Endothelial cell of umbilical vein (primary cell): ENCODE measurements at regions of chr10 and their contacts with region 1.

Region 1: DNA sequence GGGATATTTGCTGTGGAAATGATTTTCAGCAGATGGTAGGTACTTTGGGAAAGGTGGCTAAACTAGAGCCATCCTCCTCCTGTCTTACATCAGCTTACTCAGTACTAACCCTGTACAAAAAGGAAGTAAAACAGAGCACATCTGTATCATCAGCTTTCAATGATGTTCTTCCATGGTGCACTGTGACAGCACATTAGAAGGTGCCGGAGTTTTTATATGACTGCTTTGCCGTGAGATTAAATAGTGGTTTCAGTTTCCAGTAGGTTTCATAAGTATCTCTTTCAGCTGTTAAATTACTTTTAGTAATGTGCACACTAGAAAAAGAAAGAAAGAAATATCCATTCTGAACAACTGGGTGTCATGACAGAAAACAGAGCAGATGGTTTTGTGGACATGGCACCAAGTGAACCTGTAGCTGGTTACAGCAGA is 86.5 kb downstream of the ARID5B start:
- DNase-seq: no peak
- H3K4me3 ChIP-seq: no peak overlapping the region
- H3K27ac ChIP-seq: no peak overlapping the region
- H3K4me1 ChIP-seq: peaks cover 9% of the 10 kb centered on the region
- H3K27me3 ChIP-seq: no peaks in the 10 kb centered on the region
- CTCF ChIP-seq: no peak
- POLR2A ChIP-seq: no peak

Region 2: DNA sequence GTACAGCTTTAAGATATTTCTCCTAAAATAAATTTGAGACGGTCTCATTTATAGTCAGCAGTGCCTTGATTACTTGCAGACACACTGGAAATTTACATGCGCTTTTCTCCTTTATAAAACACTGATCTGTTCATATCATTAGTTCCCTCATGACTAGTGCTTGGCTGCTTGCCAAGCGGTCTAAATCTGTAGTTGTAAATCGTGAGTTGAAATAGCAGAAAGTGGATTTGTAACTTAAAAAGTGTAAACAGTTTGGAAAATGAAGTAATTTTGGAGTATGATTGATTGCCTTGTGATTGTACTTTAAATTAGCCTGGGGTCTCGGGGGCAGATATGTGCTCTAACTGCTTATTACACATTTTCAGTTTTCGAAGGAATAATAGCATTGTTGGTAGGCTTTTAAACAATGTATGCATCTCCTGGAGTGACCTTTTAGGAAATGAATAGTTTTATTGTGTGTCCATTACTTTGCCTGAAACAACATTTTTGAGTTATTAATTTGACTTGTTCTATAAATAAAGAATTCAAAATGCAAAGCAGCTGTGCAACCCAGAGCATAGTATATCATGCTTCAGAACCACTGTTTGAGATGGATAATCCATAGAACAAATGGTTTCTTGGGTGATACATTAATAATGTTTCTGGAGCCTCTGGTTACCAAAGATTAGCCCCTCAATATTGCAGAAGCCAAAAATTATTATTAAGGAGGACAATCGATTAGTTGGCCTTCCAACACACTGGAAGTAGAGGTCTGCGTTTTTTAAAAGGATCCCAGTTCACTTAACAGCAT is 13.2 kb before region 1 on chr10:
- CTCF ChIA-PET with region 1: no interaction called
- POLR2A ChIA-PET with region 1: no interaction called
- dilution Hi-C with region 1: no loop called
- intact Hi-C with region 1: loop called (anchors 1 kb)
- DNase-seq: peak; percentile 78
- H3K4me3 ChIP-seq: no peak overlapping the region
- H3K27ac ChIP-seq: no peak overlapping the region
- H3K4me1 ChIP-seq: peaks cover 26% of the 10 kb centered on the region
- H3K27me3 ChIP-seq: no peaks in the 10 kb centered on the region
- CTCF ChIP-seq: no peak
- POLR2A ChIP-seq: no peak